OCI-LY7 (cell line): ENCODE measurements at regions of chr3 and their contacts with region 1.

Region 1: GRCh38 chr3:190849607-190850006 is 12.9 kb downstream of the GMNC start:
- DNase-seq: no peak
- H3K4me3 ChIP-seq: no peak overlapping the region
- H3K27ac ChIP-seq: no peak overlapping the region
- H3K4me1 ChIP-seq: no peaks in the 10 kb centered on the region
- CTCF ChIP-seq: no peak

Region 2: GRCh38 chr3:190396001-190396400 is 453.6 kb before region 1 on chr3:
- CTCF ChIA-PET with region 1: no interaction called
- POLR2A ChIA-PET with region 1: no interaction called
- intact Hi-C with region 1: no loop called
- DNase-seq: no peak
- H3K4me3 ChIP-seq: no peak overlapping the region
- H3K27ac ChIP-seq: no peak overlapping the region
- H3K4me1 ChIP-seq: no peaks in the 10 kb centered on the region
- CTCF ChIP-seq: no peak

Region 3: GRCh38 chr3:190826018-190826417 is 23.6 kb before region 1 on chr3:
- CTCF ChIA-PET with region 1: no interaction called
- POLR2A ChIA-PET with region 1: no interaction called
- intact Hi-C with region 1: loop called (anchors 1 kb)
- DNase-seq: no peak
- H3K4me3 ChIP-seq: no peak overlapping the region
- H3K27ac ChIP-seq: no peak overlapping the region
- H3K4me1 ChIP-seq: no peaks in the 10 kb centered on the region
- CTCF ChIP-seq: no peak

Region 4: GRCh38 chr3:190911382-190911781 is 61.8 kb after region 1 on chr3:
- CTCF ChIA-PET with region 1: no interaction called
- POLR2A ChIA-PET with region 1: no interaction called
- intact Hi-C with region 1: no loop called
- DNase-seq: no peak
- H3K4me3 ChIP-seq: no peak overlapping the region
- H3K27ac ChIP-seq: no peak overlapping the region
- H3K4me1 ChIP-seq: no peaks in the 10 kb centered on the region
- CTCF ChIP-seq: no peak